ENCODE measurements at regions of chr17 and their contacts with region 1.

Region 1: GRCh38 chr17:40417609-40418427 is at the start of gene TOP2A:
- DNase-seq: peak; percentile 100
- H3K4me3 Mint-ChIP-seq: peak within 1 kb of the TSS; percentile 96
- H3K27ac Mint-ChIP-seq: peak within 1 kb of the TSS; percentile 94
- H3K4me1 Mint-ChIP-seq: peaks cover 42% of the 10 kb centered on the region
- H3K27me3 Mint-ChIP-seq: no peaks in the 10 kb centered on the region
- CTCF ChIP-seq: no peak
- total RNA-seq, gene TOP2A: 1,389 and 1,672 TPM in 2 replicates

Region 2: DNA sequence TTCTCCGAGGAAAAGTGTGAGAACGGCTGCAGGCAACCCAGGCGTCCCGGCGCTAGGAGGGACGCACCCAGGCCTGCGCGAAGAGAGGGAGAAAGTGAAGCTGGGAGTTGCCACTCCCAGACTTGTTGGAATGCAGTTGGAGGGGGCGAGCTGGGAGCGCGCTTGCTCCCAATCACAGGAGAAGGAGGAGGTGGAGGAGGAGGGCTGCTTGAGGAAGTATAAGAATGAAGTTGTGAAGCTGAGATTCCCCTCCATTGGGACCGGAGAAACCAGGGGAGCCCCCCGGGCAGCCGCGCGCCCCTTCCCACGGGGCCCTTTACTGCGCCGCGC is 718.0 kb before region 1 on chr17 and contains the start of gene ERBB2:
- CTCF ChIA-PET with region 1: interaction called, 6 read pairs
- intact Hi-C with region 1: loop called (anchors 5 kb)
- DNase-seq: peak; percentile 100
- H3K4me3 Mint-ChIP-seq: peak within 1 kb of the TSS; percentile 71
- H3K27ac Mint-ChIP-seq: peak within 1 kb of the TSS; percentile 67
- H3K4me1 Mint-ChIP-seq: peaks cover 68% of the 10 kb centered on the region
- H3K27me3 Mint-ChIP-seq: no peaks in the 10 kb centered on the region
- CTCF ChIP-seq: no peak
- total RNA-seq, gene ERBB2: 4,829 and 4,830 TPM in 2 replicates

Region 3: GRCh38 chr17:39927101-39927928 is 490.5 kb before region 1 on chr17 and contains the starts of genes LRRC3C and ORMDL3:
- CTCF ChIA-PET with region 1: interaction called, 13 read pairs
- intact Hi-C with region 1: loop called (anchors 5 kb)
- DNase-seq: no peak
- H3K4me3 Mint-ChIP-seq: peak within 1 kb of the TSS; percentile 74
- H3K27ac Mint-ChIP-seq: peak within 1 kb of the TSS; percentile 66
- H3K4me1 Mint-ChIP-seq: peaks cover 60% of the 10 kb centered on the region
- H3K27me3 Mint-ChIP-seq: no peaks in the 10 kb centered on the region
- CTCF ChIP-seq: no peak
- total RNA-seq, gene LRRC3C: not detected in 2 replicates
- total RNA-seq, gene ORMDL3: 1,738 and 1,968 TPM in 2 replicates

Region 4: GRCh38 chr17:40113110-40113906 is 304.5 kb before region 1 on chr17:
- CTCF ChIA-PET with region 1: interaction called, 46 read pairs
- intact Hi-C with region 1: no loop called
- DNase-seq: peak; percentile 100
- H3K4me3 Mint-ChIP-seq: peak overlapping the region; percentile 65
- H3K27ac Mint-ChIP-seq: peak overlapping the region; percentile 74
- H3K4me1 Mint-ChIP-seq: peaks cover 58% of the 10 kb centered on the region
- H3K27me3 Mint-ChIP-seq: no peaks in the 10 kb centered on the region
- CTCF ChIP-seq: no peak

Region 5: DNA sequence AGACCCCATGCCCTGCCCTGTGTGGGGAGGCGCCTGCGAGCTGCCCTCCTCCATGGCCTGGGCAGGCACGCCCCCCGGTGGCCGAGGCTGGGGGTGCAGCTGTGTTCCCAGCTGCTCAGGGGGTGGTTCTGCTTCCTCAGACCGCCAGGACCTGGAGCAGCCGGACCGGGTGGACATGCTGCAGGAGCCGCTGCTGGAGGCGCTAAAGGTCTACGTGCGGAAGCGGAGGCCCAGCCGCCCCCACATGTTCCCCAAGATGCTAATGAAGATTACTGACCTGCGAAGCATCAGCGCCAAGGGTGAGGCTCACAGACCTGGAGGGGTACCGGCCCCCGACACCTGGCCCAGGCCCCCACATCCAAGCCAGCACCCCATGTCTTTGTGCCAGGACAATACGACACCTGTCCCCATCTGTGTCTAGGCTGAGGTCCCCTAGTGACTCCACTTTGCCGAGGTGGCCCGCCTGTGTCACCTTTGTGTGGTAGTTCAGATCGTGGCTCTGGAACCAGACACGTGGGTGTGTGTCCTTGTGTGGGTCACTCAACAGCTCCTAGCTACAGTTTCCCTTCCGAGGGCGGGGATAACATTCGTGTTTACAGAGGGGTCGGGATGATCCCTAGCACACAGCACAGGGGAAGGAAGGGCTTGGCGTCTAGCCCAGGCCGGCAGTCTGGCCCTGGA is 62.6 kb before region 1 on chr17:
- CTCF ChIA-PET with region 1: interaction called, 129 read pairs
- intact Hi-C with region 1: loop called (anchors 1 kb)
- DNase-seq: peak; percentile 100
- H3K4me3 Mint-ChIP-seq: no peak overlapping the region
- H3K27ac Mint-ChIP-seq: no peak overlapping the region
- H3K4me1 Mint-ChIP-seq: peaks cover 29% of the 10 kb centered on the region
- H3K27me3 Mint-ChIP-seq: no peaks in the 10 kb centered on the region
- CTCF ChIP-seq: no peak

Region 6: GRCh38 chr17:40450175-40450574 is 32.4 kb after region 1 on chr17:
- CTCF ChIA-PET with region 1: interaction called, 115 read pairs
- intact Hi-C with region 1: no loop called
- DNase-seq: peak; percentile 100
- H3K4me3 Mint-ChIP-seq: no peak overlapping the region
- H3K27ac Mint-ChIP-seq: no peak overlapping the region
- H3K4me1 Mint-ChIP-seq: peaks cover 48% of the 10 kb centered on the region
- H3K27me3 Mint-ChIP-seq: peaks cover 17% of the 10 kb centered on the region
- CTCF ChIP-seq: no peak

Region 7: GRCh38 chr17:40531051-40531991 is 113.5 kb after region 1 on chr17:
- CTCF ChIA-PET with region 1: interaction called, 498 read pairs
- intact Hi-C with region 1: loop called (anchors 5 kb)
- DNase-seq: no peak
- H3K4me3 Mint-ChIP-seq: no peak overlapping the region
- H3K27ac Mint-ChIP-seq: no peak overlapping the region
- H3K4me1 Mint-ChIP-seq: peaks cover 19% of the 10 kb centered on the region
- H3K27me3 Mint-ChIP-seq: peaks cover 48% of the 10 kb centered on the region
- CTCF ChIP-seq: no peak

Region 8: DNA sequence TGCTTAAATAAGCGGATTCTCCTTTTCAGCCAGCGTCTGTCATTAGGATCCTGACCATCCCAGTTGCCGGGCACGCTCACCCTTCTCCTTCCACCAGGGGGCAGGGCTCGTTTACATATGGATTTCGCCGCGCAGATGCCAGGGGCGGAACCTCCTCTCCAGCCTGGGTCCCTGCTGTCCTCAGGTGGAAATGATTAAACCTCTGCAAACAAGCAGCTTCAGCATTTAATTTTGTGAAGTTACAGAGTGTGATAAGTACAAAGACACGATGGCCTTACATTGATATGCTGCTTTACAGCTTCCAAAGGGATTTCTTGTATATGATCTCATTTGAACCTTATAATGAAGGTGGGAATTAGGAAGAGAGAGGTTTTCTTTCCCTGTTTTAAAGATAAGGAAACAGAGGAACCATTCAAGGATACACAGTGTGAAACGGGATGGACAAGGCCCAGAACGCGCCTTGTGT is 385.8 kb after region 1 on chr17:
- CTCF ChIA-PET with region 1: no interaction called
- intact Hi-C with region 1: no loop called
- DNase-seq: peak; percentile 100
- H3K4me3 Mint-ChIP-seq: no peak overlapping the region
- H3K27ac Mint-ChIP-seq: no peak overlapping the region
- H3K4me1 Mint-ChIP-seq: no peaks in the 10 kb centered on the region
- H3K27me3 Mint-ChIP-seq: peaks cover 38% of the 10 kb centered on the region
- CTCF ChIP-seq: peak; percentile 100